CD4-positive, alpha-beta memory T cell (primary cell): ENCODE measurements at regions of chr3 and their contacts with region 1.

Region 1: GRCh38 chr3:152241142-152242017 is 27.3 kb upstream of the MBNL1 start:
- DNase-seq: no peak
- H3K4me3 ChIP-seq: peak overlapping the region in 1 of 2 donors; percentile 17
- H3K4me3 Mint-ChIP-seq: peak overlapping the region; percentile 69 to 97 (median 78)
- H3K27ac ChIP-seq: peak overlapping the region; percentile 69
- H3K27ac Mint-ChIP-seq: peak overlapping the region; percentile 82 to 97 (median 92)
- H3K4me1 ChIP-seq: peaks cover 56% of the 10 kb centered on the region
- H3K4me1 Mint-ChIP-seq: peaks cover 46 to 81% (median 52%) of the 10 kb centered on the region in 4 donors
- H3K27me3 ChIP-seq: no peaks in the 10 kb centered on the region
- H3K27me3 Mint-ChIP-seq: no peaks in the 10 kb centered on the region

Region 2: DNA sequence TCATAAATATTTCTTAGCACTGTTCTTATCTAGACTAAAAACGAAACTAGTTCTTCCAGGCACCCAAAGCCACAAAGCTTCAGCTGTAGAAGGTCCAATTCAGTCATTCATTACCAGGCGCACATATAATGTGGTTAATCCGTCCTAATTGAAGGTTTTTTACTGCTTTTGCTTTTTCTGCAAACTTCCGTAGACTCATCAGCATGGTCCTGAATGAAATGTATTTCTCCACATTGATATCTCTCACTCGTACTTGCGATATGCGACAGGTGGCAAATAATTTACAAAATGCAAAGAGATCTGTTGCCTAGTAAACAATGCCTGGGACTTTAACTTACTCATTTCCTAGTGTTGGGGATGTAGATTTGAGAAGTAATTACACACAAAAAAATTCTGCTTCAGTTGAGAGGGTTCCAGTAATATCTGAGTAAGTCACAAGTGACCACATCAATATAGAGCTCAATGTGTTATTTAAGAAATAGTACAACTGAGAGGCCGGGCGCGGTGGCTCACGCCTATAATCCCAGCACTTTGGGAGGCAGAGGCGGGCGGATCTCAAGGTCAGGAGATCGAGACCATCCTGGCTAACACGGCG is 47.6 kb before region 1 on chr3:
- CTCF ChIA-PET with region 1: interaction called, 16 read pairs
- POLR2A ChIA-PET with region 1: interaction called, 113 read pairs
- intact Hi-C with region 1: no loop called
- DNase-seq: peak; percentile 63 to 79 (median 68)
- H3K4me3 ChIP-seq: peak overlapping the region; percentile 31 to 37
- H3K4me3 Mint-ChIP-seq: peak overlapping the region; percentile 81 to 97 (median 90)
- H3K27ac ChIP-seq: peak overlapping the region; percentile 62
- H3K27ac Mint-ChIP-seq: peak overlapping the region; percentile 89 to 98 (median 92)
- H3K4me1 ChIP-seq: peaks cover 82% of the 10 kb centered on the region
- H3K4me1 Mint-ChIP-seq: peaks cover 60 to 85% (median 72%) of the 10 kb centered on the region in 4 donors
- H3K27me3 ChIP-seq: no peaks in the 10 kb centered on the region
- H3K27me3 Mint-ChIP-seq: no peaks in the 10 kb centered on the region

Region 3: GRCh38 chr3:152205097-152205593 is 36.2 kb before region 1 on chr3:
- CTCF ChIA-PET with region 1: interaction called, 4 read pairs
- POLR2A ChIA-PET with region 1: interaction called, 193 read pairs
- intact Hi-C with region 1: no loop called
- DNase-seq: peak in 3 of 5 donors; percentile 41 to 53 (median 47)
- H3K4me3 ChIP-seq: peak overlapping the region; percentile 41 to 63
- H3K4me3 Mint-ChIP-seq: peak overlapping the region; percentile 91 to 100 (median 98)
- H3K27ac ChIP-seq: peak overlapping the region; percentile 75
- H3K27ac Mint-ChIP-seq: peak overlapping the region; percentile 91 to 98 (median 96)
- H3K4me1 ChIP-seq: peaks cover 77% of the 10 kb centered on the region
- H3K4me1 Mint-ChIP-seq: peaks cover 41 to 79% (median 56%) of the 10 kb centered on the region in 4 donors
- H3K27me3 ChIP-seq: no peaks in the 10 kb centered on the region
- H3K27me3 Mint-ChIP-seq: no peaks in the 10 kb centered on the region

Region 4: DNA sequence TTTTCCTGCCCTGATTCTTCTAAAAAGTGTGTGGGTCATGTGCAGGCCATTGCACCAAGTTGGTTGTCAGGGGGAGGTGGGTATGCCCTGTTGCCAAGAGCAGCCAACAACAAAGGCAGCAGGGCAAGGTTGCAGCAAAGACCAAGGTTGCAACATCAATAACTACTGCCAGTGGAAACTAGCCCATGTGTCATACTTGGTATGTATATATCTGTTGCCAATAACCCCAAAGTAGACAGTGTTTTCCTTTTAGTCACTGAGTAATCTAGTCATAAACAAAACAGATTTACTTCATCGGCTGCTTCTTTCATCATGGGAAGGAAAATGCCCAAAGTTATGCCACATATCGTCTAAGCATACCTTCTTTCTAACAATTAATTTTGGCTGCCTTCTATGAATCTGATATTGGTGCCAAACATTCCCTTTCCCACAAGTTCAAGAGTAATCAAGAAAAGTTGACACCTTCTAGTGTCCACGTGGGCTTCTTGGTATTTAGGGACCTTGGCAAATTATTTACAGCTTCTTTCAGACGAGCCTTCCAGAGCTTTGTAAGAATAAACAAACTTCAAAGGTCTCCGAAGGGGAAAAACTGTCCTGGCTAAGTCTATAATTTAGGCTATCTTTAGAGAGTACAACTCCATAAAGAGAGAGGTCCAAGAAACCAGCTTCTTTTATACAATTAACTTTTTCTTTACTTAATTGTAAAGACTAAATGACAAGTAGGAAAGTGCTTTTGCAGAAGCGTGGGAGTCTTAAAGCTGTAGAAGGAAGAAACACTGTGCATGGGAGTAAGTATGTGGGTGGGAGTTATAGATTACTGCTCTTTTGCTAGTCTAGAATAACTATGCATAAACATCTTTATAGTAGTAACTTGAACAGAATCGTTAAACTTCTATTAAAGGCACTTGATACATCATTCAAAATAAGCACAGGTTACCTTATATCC is 17.3 kb after region 1 on chr3:
- CTCF ChIA-PET with region 1: interaction called, 49 read pairs
- POLR2A ChIA-PET with region 1: interaction called, 414 read pairs
- intact Hi-C with region 1: loop called (anchors 1 kb)
- DNase-seq: peak in 4 of 5 donors; percentile 56 to 94 (median 62)
- H3K4me3 ChIP-seq: peak overlapping the region in 1 of 2 donors; percentile 37
- H3K4me3 Mint-ChIP-seq: peak overlapping the region; percentile 74 to 92 (median 80)
- H3K27ac ChIP-seq: peak overlapping the region; percentile 75
- H3K27ac Mint-ChIP-seq: peak overlapping the region; percentile 91 to 96 (median 94)
- H3K4me1 ChIP-seq: peaks cover 96% of the 10 kb centered on the region
- H3K4me1 Mint-ChIP-seq: peaks cover 78 to 92% (median 85%) of the 10 kb centered on the region in 4 donors
- H3K27me3 ChIP-seq: no peaks in the 10 kb centered on the region
- H3K27me3 Mint-ChIP-seq: no peaks in the 10 kb centered on the region

Region 5: DNA sequence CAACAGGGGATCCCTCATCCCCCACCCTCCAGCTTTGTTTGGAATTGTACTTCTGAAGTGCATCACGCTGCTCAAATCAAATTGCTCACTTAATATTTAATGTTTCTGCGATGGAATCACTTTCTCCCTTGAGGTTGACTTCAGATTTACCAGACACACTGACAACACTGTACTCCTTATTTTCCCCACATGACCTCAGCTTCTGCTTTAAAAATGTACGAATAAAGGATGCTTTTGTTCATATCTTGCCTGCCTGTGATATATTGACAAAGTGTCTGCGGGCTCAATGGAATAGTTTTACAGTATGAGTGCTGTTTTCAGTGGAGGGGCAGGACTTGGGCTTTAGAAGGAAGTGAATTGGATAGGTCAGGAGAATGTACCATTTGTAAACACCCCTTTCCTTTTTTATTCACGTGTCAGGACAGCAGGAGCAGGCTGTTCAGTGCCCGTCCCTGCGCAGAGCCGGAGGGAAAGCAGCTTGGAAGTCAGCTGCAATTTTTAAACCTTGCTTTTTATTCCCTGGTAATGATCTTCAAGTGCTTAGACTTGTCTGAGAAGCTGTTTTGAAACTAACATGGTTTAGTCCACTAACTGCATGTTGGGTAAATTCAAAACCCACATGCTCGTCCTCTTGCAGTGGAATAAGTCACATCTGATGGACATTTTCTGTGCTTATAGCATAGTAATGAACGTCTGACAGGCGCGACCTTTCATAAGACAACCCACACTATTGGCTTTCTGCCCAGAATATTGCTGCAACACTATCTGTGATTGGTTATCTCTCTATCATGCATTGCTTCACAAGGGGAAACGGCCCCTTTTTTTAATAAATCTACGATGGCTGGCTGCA is 57.2 kb after region 1 on chr3:
- CTCF ChIA-PET with region 1: no interaction called
- POLR2A ChIA-PET with region 1: interaction called, 21 read pairs
- intact Hi-C with region 1: loop called (anchors 2 kb)
- DNase-seq: peak; percentile 81 to 84 (median 82)
- H3K4me3 ChIP-seq: peak overlapping the region; percentile 23 to 29
- H3K4me3 Mint-ChIP-seq: peak overlapping the region; percentile 64 to 87 (median 78)
- H3K27ac ChIP-seq: peak overlapping the region; percentile 54
- H3K27ac Mint-ChIP-seq: peak overlapping the region; percentile 88 to 97 (median 92)
- H3K4me1 ChIP-seq: peaks cover 98% of the 10 kb centered on the region
- H3K4me1 Mint-ChIP-seq: peaks cover 62 to 82% (median 72%) of the 10 kb centered on the region in 4 donors
- H3K27me3 ChIP-seq: no peaks in the 10 kb centered on the region
- H3K27me3 Mint-ChIP-seq: no peaks in the 10 kb centered on the region

Region 6: DNA sequence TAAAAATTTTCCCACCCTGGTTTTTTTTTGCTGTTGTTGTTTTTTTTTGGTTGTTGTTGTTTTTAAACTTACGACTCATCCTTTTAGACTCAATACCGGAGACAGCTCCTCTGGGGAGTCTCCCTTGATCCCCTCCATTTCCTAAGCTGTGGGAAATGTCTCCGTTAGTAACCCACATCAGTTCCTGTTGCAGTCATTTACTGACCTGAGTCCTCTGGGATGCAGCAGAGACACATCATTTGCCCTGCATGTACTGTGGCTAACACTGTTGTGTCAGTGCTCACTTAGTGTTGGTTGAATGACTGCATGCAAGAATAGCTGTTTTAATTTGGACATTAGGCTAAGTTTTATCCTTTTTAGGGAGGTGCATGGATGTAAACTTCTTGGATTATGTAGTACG is 111.2 kb after region 1 on chr3:
- CTCF ChIA-PET with region 1: no interaction called
- POLR2A ChIA-PET with region 1: no interaction called
- intact Hi-C with region 1: no loop called
- DNase-seq: no peak
- H3K4me3 ChIP-seq: no peak overlapping the region
- H3K4me3 Mint-ChIP-seq: peak overlapping the region in 3 of 8 donors; percentile 12 to 65 (median 27)
- H3K27ac ChIP-seq: no peak overlapping the region
- H3K27ac Mint-ChIP-seq: peak overlapping the region; percentile 33 to 90 (median 65)
- H3K4me1 ChIP-seq: peaks cover 95% of the 10 kb centered on the region
- H3K4me1 Mint-ChIP-seq: peaks cover 40 to 54% (median 44%) of the 10 kb centered on the region in 4 donors
- H3K27me3 ChIP-seq: no peaks in the 10 kb centered on the region
- H3K27me3 Mint-ChIP-seq: no peaks in the 10 kb centered on the region